ENCODE measurements at regions of chr1 and their contacts with region 1.

Region 1: GRCh38 chr1:200302192-200302920 is 107.5 kb downstream of the ZNF281 start:
- DNase-seq: peak in 4 of 5 donors; percentile 19 to 66 (median 28)
- ATAC-seq: peak; percentile 44 to 74 (median 52)
- H3K4me3 ChIP-seq: peak overlapping the region; percentile 48 to 81 (median 70)
- H3K27ac ChIP-seq: peak overlapping the region in 4 of 12 donors; percentile 13 to 57 (median 26)
- H3K4me1 ChIP-seq: peaks cover 0 to 17% (median 3%) of the 10 kb centered on the region in 12 donors
- H3K27me3 ChIP-seq: no peaks in the 10 kb centered on the region
- CTCF ChIP-seq: peak in 4 of 12 donors; percentile 10 to 29 (median 18)
- POLR2A ChIP-seq: no peak

Region 2: DNA sequence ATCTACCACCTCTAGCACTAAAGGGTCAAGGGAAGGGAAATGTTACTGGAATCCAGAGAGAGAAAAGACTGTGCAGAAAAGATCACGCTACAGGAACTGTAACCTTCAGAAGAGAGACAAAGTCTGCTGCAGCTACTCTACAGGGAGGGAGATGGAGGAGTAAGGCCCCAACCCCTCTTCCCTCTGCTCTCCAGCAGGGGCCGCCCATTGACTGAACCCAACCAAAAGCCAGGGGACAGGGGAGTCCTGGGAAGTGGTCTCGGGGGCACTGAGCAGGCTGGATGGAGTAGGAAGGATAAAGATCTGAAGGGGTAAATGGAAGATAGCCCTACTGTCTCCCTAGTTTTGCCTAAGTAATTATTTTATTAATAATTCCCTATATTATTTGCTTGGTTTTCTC is 347.7 kb before region 1 on chr1:
- intact Hi-C with region 1: loop called in 2 of 10 experiments (anchors 5 to 10 kb)
- DNase-seq: no peak
- ATAC-seq: peak in 1 of 4 donors; percentile 37
- H3K4me3 ChIP-seq: no peak overlapping the region
- H3K27ac ChIP-seq: no peak overlapping the region
- H3K4me1 ChIP-seq: no peaks in the 10 kb centered on the region
- H3K27me3 ChIP-seq: no peaks in the 10 kb centered on the region
- CTCF ChIP-seq: peak; percentile 14 to 50 (median 33)
- POLR2A ChIP-seq: no peak

Region 3: DNA sequence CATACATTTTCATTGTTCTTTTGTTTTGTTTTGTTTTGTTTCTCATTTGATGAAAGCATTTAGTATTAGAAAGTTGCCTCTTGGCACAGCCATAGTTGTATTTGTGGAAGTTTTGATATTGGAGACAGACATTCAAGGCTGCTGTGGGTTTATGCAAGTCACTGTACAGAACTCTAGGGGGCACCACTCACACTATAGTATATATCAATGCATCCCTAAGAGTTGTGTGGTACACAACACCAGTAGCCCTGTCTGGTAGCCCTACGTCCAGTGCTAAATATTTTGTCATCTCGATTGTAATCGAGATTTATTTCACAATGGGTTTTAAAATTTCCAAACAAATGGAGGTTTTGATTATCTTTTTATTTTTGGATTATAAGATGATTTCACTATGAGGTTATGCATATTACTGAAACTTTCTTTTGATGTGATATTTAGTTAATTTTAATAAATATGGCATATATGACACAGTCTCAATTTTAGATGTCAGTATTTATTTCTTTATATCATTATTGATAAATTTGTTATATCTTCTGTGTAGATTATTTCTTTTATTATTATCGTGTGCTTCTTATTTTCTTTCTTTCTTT is 162.6 kb before region 1 on chr1:
- intact Hi-C with region 1: loop called in 5 of 10 experiments (anchors 5 to 10 kb)
- DNase-seq: no peak
- ATAC-seq: peak in 2 of 4 donors; percentile 65 to 73
- H3K4me3 ChIP-seq: no peak overlapping the region
- H3K27ac ChIP-seq: no peak overlapping the region
- H3K4me1 ChIP-seq: peaks cover 0 to 7% (median 0%) of the 10 kb centered on the region in 12 donors
- H3K27me3 ChIP-seq: no peaks in the 10 kb centered on the region
- CTCF ChIP-seq: peak; percentile 17 to 66 (median 52)
- POLR2A ChIP-seq: no peak